ENCODE measurements at regions of chr7 and their contacts with region 1.

Region 1: GRCh38 chr7:101436857-101437576 is 74.3 kb downstream of the COL26A1 start:
- DNase-seq: peak; percentile 62
- H3K4me3 ChIP-seq: no peak overlapping the region
- H3K27ac ChIP-seq: no peak overlapping the region
- H3K4me1 ChIP-seq: peaks cover 0 to 4% of the 10 kb centered on the region in 2 experiments; a peak in 1 of 4 replicates
- H3K27me3 ChIP-seq: peaks cover 40% of the 10 kb centered on the region
- CTCF ChIP-seq: no peak
- EP300 ChIP-seq: no peak
- RAD21 ChIP-seq: no peak

Region 2: DNA sequence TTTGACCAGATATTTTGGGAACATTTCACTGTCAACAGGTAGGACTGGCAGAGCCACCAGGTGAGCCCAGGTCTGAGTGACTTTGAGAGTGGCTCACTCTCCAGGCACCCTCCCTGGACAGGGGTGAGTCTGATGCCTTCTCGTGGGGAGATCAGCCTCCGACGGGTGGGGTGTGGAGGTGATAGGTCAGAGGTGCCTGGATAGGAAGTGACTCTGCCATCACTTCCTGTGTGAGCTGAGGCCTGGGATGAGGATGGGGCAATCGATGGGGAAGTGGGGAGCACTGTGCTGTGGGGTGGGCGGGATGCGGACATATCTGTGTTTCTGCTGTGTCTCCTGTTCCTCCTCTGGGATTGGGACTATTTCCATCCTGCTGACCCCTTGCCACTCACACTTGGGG is 150.0 kb before region 1 on chr7:
- CTCF ChIA-PET with region 1: interaction called, 22 read pairs
- POLR2A ChIA-PET with region 1: interaction called, 4 read pairs
- DNase-seq: no peak
- H3K4me3 ChIP-seq: no peak overlapping the region
- H3K27ac ChIP-seq: no peak overlapping the region
- H3K4me1 ChIP-seq: peaks cover 0 to 2% of the 10 kb centered on the region in 2 experiments; a peak in 1 of 4 replicates
- H3K27me3 ChIP-seq: peaks cover 23% of the 10 kb centered on the region
- CTCF ChIP-seq: no peak
- EP300 ChIP-seq: no peak
- RAD21 ChIP-seq: no peak

Region 3: DNA sequence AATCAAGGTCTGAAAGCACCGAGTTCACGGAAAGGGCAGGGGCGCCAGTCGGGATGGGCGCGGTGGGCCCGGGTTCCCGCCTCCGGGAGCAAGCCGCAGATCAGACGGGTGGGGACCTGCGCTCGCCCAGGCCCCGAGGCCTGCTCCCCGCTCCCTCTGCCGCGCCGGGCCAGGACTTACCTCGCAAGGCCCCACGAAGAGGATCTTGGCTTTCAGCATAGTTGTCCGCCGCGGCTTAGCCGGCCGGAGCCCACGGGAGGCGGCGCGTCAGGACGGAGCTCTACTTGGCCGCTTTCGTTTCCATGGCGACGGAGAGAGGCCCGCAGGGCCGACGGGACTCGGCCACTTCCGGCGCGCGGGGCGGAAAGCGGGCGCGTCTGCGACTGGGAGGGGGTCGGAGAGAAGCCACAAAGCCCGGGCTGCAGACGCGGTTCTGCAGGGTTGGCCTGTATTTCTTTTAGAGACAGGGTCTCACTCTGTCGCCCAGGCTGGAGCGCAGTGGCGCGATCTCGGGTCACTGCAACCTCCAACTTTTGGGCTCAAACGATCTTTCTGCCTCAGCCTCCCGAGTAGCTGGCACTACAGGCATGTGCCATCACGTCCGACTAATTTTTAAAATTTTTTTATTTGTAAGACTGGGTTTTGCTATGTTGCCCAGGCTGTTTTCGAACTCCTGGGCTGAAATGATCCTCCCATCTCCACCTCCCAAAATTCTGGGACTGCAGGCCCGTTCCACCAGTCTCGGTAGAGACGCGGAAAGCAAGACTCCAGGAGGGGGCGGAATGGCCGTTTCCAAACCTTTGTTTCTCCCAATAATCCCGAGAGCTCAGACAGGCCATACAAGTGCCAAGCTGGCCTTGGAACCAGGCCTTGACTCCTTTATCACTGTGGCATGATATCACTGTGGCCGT is 115.3 kb before region 1 on chr7 and contains the start of gene IFT22:
- CTCF ChIA-PET with region 1: interaction called, 29 read pairs
- POLR2A ChIA-PET with region 1: no interaction called
- DNase-seq: peak; percentile 99
- H3K4me3 ChIP-seq: peak within 1 kb of the TSS; percentile 61 to 78
- H3K27ac ChIP-seq: peak within 1 kb of the TSS; percentile 59 to 81
- H3K4me1 ChIP-seq: peaks cover 0 to 2% of the 10 kb centered on the region in 2 experiments; a peak in 2 of 4 replicates
- H3K27me3 ChIP-seq: no peaks in the 10 kb centered on the region
- CTCF ChIP-seq: peak; percentile 57
- EP300 ChIP-seq: no peak; a peak in 1 of 4 replicates
- RAD21 ChIP-seq: peak; percentile 72
- polyA plus RNA-seq, gene IFT22: 62.4 and 66.7 TPM in 2 replicates

Region 4: DNA sequence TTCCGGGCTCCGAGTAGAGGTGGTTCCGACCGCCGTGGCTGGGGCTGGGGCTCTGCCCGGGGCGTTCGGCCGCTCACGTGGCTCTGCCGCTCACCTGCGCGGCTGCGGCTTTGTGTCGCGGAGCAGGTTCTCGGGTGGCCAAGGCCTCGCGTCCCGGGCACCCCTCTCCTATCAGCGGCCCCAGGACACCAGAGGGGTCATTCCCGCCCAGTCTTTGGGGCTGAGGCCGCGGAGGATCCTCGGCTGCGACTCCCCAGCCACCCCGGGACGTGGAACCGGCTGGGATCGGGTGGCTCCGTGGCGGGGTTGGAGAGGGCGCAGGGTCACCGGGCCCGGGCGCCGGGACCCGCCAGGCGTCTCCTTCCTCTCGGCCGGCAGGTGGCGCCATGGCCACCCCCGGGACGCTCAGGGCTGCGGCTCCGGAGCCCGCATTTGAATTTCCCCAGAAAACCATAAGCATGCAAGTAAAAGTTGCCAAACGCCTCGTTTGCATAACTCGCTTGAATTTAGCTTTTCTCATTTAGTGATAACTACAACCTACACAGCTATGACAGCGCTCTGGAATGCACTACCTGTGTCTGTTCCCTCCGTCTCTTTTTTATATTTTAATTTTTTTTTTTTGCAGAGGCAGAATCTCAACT is 73.2 kb before region 1 on chr7:
- CTCF ChIA-PET with region 1: interaction called, 81 read pairs
- POLR2A ChIA-PET with region 1: interaction called, 3 read pairs
- DNase-seq: peak; percentile 98
- H3K4me3 ChIP-seq: peak overlapping the region; percentile 56 to 70
- H3K27ac ChIP-seq: peak overlapping the region in 1 of 2 experiments; percentile 9; a peak in 1 of 4 replicates
- H3K4me1 ChIP-seq: peaks cover 0 to 4% of the 10 kb centered on the region in 2 experiments; a peak in 1 of 4 replicates
- H3K27me3 ChIP-seq: peaks cover 11% of the 10 kb centered on the region
- CTCF ChIP-seq: peak; percentile 98
- EP300 ChIP-seq: no peak
- RAD21 ChIP-seq: peak; percentile 91

Region 5: DNA sequence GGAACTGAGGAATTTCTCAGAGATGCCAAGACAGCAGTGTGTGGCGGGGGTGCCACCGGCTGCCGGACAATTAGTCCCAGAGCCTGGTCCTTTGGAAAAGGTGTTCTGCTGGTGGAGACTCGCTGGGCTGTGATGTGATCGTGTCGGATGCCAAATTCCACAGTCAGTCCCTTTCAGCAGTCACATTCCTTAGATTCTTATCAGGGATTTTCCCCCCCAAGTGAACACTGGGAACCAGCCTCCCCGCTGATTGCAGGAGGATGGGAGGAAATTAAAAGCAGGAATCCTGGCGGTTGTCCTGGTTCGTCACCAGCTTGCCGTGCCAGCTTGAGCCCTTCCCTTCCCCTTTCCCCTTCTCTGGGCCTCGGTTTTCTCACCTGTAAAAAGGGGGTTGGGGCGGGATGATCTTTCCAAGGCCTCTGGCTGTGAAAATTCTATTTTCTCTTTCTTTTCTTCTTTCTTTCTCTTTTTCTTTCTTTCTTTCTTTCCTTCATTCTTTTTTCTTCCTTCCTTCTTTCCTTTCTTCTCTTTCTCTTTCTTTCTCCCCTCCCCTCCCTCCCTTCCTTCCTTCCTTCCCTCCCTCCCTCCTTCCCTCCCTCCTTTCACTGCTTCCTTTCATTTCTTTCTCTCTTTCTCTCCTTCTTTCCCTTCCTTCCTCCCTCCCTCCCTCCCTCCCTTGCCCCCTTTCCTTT is 34.8 kb before region 1 on chr7:
- CTCF ChIA-PET with region 1: interaction called, 17 read pairs
- POLR2A ChIA-PET with region 1: no interaction called
- DNase-seq: peak; percentile 78
- H3K4me3 ChIP-seq: peak overlapping the region in 1 of 2 experiments; percentile 2; a peak in 2 of 4 replicates
- H3K27ac ChIP-seq: no peak overlapping the region
- H3K4me1 ChIP-seq: peaks cover 5 to 7% of the 10 kb centered on the region in 2 experiments; a peak in 1 of 4 replicates
- H3K27me3 ChIP-seq: peaks cover 14% of the 10 kb centered on the region; the same call in 1 of the 2 replicates
- CTCF ChIP-seq: no peak
- EP300 ChIP-seq: peak in 1 of 2 experiments; percentile 74; a peak in 1 of 4 replicates
- RAD21 ChIP-seq: no peak

Region 6: GRCh38 chr7:101426303-101427011 is 10.6 kb before region 1 on chr7:
- CTCF ChIA-PET with region 1: interaction called, 12 read pairs
- POLR2A ChIA-PET with region 1: no interaction called
- DNase-seq: no peak
- H3K4me3 ChIP-seq: no peak overlapping the region
- H3K27ac ChIP-seq: no peak overlapping the region
- H3K4me1 ChIP-seq: no peaks in the 10 kb centered on the region
- H3K27me3 ChIP-seq: peaks cover 72% of the 10 kb centered on the region
- CTCF ChIP-seq: no peak
- EP300 ChIP-seq: no peak
- RAD21 ChIP-seq: no peak

Region 7: GRCh38 chr7:101465576-101466196 is 28.7 kb after region 1 on chr7:
- CTCF ChIA-PET with region 1: interaction called, 12 read pairs
- POLR2A ChIA-PET with region 1: no interaction called
- DNase-seq: no peak
- H3K4me3 ChIP-seq: no peak overlapping the region
- H3K27ac ChIP-seq: no peak overlapping the region
- H3K4me1 ChIP-seq: no peaks in the 10 kb centered on the region
- H3K27me3 ChIP-seq: peaks cover 22% of the 10 kb centered on the region; the same call in 1 of the 2 replicates
- CTCF ChIP-seq: no peak
- EP300 ChIP-seq: no peak
- RAD21 ChIP-seq: no peak

Measured in SK-N-SH (cell line).